HEK293 (cell line): ENCODE measurements at regions of chr11 and their contacts with region 1.

Region 1: DNA sequence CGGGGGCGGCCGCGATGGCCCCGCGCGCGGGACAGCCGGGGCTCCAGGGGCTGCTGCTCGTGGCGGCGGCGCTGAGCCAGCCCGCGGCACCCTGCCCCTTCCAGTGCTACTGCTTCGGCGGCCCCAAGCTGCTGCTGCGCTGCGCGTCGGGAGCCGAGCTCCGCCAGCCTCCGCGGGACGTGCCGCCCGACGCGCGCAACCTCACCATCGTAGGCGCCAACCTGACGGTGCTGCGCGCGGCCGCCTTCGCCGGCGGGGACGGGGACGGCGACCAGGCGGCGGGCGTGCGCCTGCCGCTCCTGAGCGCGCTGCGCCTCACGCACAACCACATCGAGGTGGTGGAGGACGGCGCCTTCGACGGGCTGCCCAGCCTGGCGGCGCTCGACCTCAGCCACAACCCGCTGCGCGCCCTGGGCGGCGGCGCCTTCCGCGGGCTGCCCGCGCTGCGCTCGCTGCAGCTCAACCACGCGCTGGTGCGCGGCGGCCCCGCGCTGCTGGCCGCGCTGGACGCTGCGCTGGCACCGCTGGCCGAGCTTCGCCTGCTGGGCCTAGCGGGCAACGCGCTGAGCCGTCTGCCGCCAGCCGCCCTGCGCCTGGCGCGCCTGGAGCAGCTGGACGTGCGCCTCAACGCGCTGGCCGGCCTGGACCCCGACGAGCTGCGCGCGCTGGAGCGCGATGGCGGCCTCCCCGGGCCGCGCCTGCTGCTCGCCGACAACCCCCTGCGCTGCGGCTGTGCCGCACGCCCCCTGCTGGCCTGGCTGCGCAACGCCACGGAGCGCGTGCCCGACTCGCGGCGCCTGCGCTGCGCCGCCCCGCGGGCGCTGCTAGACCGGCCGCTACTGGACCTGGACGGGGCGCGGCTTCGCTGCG is 697 bp downstream of the TPBGL start:
- H3K4me3 ChIP-seq: peak overlapping the region; percentile 49
- H3K27ac ChIP-seq: no peak overlapping the region; the same call in 1 of the 2 replicates
- H3K4me1 ChIP-seq: no peaks in the 10 kb centered on the region
- CTCF ChIP-seq: no peak

Region 2: DNA sequence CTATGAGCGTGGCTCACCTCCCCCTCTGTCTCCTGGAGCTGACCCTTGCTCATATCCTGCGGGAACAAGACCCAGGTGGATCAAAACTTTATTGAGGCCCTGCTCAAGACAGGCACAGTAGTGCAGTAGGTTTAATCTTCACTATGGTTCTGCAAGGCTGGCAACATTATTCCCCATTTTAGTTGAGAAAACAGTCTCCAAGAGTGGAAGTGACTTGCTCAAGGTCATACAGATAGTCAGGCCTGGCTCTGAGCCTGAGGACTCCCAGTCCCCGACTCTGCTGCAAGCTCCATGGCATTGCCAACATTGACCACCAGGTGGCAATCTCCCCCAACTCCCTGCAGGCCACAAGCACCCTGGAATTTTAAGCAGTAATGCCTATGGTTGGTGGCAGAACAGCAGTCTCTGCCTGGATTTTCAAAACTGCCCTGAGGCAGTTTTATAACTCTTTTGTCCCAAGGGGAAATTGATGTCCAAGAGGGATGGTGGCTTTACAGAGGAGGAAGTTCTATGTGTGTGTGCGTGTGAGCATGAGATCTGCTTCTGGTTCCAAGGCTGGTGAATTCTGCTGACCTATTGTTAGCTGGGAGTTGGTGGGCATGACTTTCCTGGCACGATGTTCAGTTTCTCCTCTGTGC is 218.4 kb before region 1 on chr11:
- CTCF ChIA-PET with region 1: interaction called, 36 read pairs
- POLR2A ChIA-PET with region 1: no interaction called
- H3K4me3 ChIP-seq: no peak overlapping the region
- H3K27ac ChIP-seq: no peak overlapping the region
- H3K4me1 ChIP-seq: no peaks in the 10 kb centered on the region
- CTCF ChIP-seq: peak; percentile 67; the same call in 1 of the 2 replicates

Region 3: DNA sequence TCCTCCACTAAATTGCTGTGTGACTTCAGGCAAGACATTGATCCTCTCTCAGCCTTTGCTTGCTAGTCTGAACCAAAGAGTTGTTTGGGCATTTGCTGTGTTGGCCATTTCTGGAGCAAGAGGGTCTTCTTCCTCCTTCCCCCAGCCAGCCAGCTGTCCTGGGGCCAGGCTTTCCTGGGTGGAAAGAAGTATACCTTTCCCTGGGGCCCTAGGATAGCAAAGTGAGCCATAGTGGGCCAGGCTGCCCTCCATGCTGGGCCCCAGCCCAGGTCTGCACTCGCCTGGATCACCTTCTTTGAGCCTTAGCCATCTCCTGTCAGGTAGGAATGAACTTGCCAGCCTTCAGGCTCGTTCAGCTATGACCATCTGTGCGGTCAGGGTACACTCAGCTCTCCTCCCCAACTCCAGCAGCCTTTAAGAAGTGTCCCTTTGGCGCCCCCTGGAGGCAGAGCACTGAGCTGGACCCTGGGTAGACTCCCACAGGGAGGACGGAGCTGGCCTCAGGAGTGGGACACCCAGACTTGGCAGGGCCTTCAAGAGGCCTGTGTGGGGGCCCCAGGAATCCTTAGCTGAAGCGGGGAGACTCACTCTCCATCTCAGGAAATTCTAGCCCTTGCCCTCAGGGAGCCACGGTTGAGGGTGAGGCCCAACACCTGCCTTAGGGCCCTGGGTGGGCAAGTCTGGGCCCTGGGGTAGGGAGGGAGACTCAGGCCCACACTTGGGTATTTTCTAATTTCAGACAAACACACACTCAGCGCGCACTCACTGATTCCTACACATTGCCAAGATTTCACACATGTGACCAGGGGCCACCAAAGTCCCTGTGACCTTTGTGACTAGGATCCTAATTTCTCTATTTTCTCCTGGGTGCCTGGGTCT is 36.3 kb before region 1 on chr11:
- CTCF ChIA-PET with region 1: interaction called, 26 read pairs
- POLR2A ChIA-PET with region 1: no interaction called
- H3K4me3 ChIP-seq: no peak overlapping the region
- H3K27ac ChIP-seq: no peak overlapping the region
- H3K4me1 ChIP-seq: no peaks in the 10 kb centered on the region
- CTCF ChIP-seq: no peak

Region 4: DNA sequence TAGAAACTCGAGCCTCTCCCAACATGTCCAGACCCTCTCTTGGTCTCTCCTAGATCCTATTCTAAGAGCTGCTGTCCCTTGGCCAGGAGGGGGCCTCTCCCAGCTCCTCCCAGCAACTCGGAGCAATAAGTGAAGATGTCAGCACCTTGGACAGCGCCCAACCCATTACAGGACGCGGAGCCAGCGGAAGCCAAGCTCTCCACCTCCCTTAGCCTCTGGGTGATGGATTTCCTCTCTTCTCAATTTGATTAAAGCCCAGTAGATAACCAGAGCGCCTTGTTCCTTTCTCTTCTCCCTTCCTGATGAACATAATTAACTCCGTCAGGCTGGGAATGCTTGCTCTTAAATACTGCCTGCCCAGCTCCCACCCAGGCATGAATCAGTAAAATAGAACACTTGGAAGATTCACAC is 26.9 kb before region 1 on chr11:
- CTCF ChIA-PET with region 1: interaction called, 17 read pairs
- POLR2A ChIA-PET with region 1: no interaction called
- H3K4me3 ChIP-seq: no peak overlapping the region
- H3K27ac ChIP-seq: no peak overlapping the region
- H3K4me1 ChIP-seq: no peaks in the 10 kb centered on the region
- CTCF ChIP-seq: 0 out of 2 replicates have a peak, but pooled peaks have one; percentile 16

Region 5: GRCh38 chr11:75223954-75224643 is 17.2 kb before region 1 on chr11:
- CTCF ChIA-PET with region 1: interaction called, 13 read pairs
- POLR2A ChIA-PET with region 1: no interaction called
- H3K4me3 ChIP-seq: no peak overlapping the region
- H3K27ac ChIP-seq: no peak overlapping the region
- H3K4me1 ChIP-seq: no peaks in the 10 kb centered on the region
- CTCF ChIP-seq: no peak

Region 6: DNA sequence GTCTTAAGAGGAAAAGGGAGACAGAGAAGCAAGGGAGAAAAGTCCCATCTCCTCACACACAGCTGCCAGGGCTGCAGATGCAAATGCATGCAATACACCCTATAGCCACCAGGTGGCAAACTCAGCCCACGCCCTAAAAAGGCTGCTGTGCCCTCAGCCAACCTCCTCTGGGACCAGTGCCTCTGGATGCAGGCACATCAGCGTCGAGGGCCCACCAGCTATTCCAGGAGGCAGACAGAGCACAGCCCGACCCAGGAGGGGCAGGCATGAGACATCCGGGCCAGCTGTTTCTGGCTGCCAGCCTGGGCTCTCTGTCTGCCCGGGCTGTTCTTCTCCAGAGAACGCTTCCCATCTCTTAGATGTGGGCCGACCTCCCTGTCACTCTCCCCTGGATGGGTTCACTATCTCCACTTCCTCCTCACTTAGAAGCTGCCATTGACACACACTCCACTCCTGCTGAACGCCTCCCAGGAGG is 39.0 kb after region 1 on chr11:
- CTCF ChIA-PET with region 1: no interaction called
- POLR2A ChIA-PET with region 1: no interaction called
- H3K4me3 ChIP-seq: no peak overlapping the region
- H3K27ac ChIP-seq: no peak overlapping the region
- H3K4me1 ChIP-seq: no peaks in the 10 kb centered on the region
- CTCF ChIP-seq: peak; percentile 80